ENCODE measurements at regions of chr22 and their contacts with region 1.

Region 1: DNA sequence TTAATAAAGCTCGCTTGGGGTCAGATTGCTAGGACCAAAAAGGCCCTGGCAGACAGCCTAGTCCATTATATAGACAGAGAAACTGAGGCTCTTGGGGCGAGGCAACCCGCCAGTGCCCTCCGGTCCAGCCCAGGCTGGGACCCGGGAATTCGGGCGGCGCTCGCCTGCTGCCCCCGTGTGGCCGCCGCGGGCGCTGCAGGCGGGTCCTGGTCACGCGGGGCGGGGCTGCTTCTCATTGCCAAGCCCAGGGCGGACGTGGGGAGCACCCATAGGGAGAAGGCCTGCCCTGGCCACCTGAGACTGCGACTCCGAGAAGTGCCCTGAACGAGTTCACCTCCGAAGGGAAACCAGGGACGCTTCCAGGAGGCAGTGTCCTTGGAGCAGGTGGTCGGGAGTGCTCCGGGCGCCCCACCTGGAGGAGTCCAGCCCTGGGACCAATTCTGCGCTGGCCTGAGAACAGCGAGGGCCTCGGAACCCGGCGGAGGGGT is 36.0 kb upstream of the CSNK1E start:
- DNase-seq: peak; percentile 69 to 90 (median 90)
- ATAC-seq: peak; percentile 80 to 86
- H3K4me3 ChIP-seq: no peak overlapping the region
- H3K27ac ChIP-seq: no peak overlapping the region
- H3K4me1 ChIP-seq: no peaks in the 10 kb centered on the region
- H3K27me3 ChIP-seq: no peaks in the 10 kb centered on the region

Region 2: GRCh38 chr22:38051900-38052862 is 301.0 kb before region 1 on chr22:
- intact Hi-C with region 1: loop called in 3 of 4 experiments (anchors 5 to 10 kb)
- DNase-seq: peak; percentile 81 to 91 (median 89)
- ATAC-seq: peak; percentile 70 to 71
- H3K4me3 ChIP-seq: no peak overlapping the region
- H3K27ac ChIP-seq: no peak overlapping the region
- H3K4me1 ChIP-seq: peaks cover 5% of the 10 kb centered on the region
- H3K27me3 ChIP-seq: no peaks in the 10 kb centered on the region

Region 3: DNA sequence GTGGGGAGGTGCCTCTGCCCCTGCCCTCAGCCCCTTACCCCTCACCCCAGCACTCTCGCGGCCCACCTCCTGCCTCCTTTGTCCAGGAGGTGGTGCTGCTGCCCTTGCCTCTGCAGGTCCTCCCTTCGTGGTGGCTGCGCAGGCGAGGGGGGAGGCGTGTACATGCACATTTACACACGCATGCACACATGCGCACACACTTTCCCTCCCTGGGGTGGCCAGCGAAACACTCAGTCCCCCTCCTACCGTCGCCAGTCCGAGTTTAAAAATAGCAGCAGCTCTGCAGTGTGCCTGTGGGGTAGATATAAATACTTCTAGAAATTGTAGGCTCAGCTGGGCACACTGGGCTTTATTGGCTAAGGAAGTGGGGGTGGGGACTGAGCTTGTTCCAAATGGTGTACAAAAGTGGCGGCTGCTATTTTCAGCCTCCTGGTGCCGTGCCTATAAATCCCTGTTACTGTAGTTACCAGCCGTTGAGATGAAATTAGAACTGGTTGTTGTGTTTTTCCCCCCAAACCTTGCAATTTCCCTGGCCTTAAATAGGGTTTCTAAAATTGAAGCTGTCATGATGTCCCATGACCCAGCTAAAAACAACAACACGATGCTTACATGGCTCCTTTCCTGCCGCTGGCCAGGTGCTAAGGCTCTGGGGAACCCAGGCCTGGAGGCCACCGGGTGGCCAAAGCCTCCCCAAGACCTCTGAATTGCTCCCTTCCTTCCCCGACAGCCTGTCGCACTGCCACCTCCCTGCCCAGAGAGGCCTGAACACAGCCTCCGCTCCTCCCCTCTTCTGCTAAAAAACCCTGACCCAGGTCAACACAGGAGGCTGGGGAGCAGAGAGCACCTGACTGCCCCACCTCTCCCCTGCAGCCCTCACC is 283.6 kb before region 1 on chr22:
- intact Hi-C with region 1: loop called in 1 of 4 experiments (anchors 5 kb)
- DNase-seq: peak; percentile 73 to 93 (median 89)
- ATAC-seq: peak; percentile 63 to 80
- H3K4me3 ChIP-seq: no peak overlapping the region
- H3K27ac ChIP-seq: peak overlapping the region; percentile 88
- H3K4me1 ChIP-seq: peaks cover 10% of the 10 kb centered on the region
- H3K27me3 ChIP-seq: no peaks in the 10 kb centered on the region